ENCODE measurements at regions of chr11 and their contacts with region 1.

Region 1: GRCh38 chr11:65382033-65382807 is at the start of gene SLC25A45:
- DNase-seq: peak; percentile 87
- ATAC-seq: peak; percentile 80
- H3K4me3 ChIP-seq: peak within 1 kb of the TSS; percentile 57 to 82 (median 65)
- H3K27ac ChIP-seq: peak within 1 kb of the TSS; percentile 88
- H3K4me1 ChIP-seq: peaks cover 89% of the 10 kb centered on the region
- H3K27me3 ChIP-seq: no peaks in the 10 kb centered on the region; a peak in 1 of 5 replicates
- CTCF ChIP-seq: peak; percentile 94
- EP300 ChIP-seq: peak in 1 of 2 experiments; percentile 76; a peak in 2 of 4 replicates
- POLR2A ChIP-seq: peak in 1 of 2 experiments; percentile 84; a peak in 2 of 4 replicates
- RAD21 ChIP-seq: peak; percentile 95
- total RNA-seq, gene SLC25A45: 2.1 and 3.4 TPM in 2 replicates

Region 2: GRCh38 chr11:65403607-65404121 is 21.4 kb after region 1 on chr11:
- CTCF ChIA-PET with region 1: no interaction called
- POLR2A ChIA-PET with region 1: interaction called, 17 read pairs
- in situ Hi-C with region 1: no loop called
- intact Hi-C with region 1: no loop called
- DNase-seq: no peak
- ATAC-seq: no peak
- H3K4me3 ChIP-seq: no peak overlapping the region
- H3K27ac ChIP-seq: no peak overlapping the region
- H3K4me1 ChIP-seq: peaks cover 19% of the 10 kb centered on the region
- H3K27me3 ChIP-seq: no peaks in the 10 kb centered on the region
- CTCF ChIP-seq: no peak
- EP300 ChIP-seq: no peak
- POLR2A ChIP-seq: no peak
- RAD21 ChIP-seq: no peak